K562 (cell line): ENCODE measurements at regions of chr11 and their contacts with region 1.

Region 1: GRCh38 chr11:1050581-1051355 is 14.2 kb upstream of the MUC6 start:
- DNase-seq: peak; percentile 63 to 84 (median 82)
- ATAC-seq: peak; percentile 96
- H3K4me3 ChIP-seq: no peak overlapping the region
- H3K27ac ChIP-seq: no peak overlapping the region
- H3K4me1 ChIP-seq: peaks cover 0 to 47% of the 10 kb centered on the region in 2 experiments; a peak in 3 of 5 replicates
- H3K27me3 ChIP-seq: peaks cover 38 to 91% of the 10 kb centered on the region in 2 experiments
- CTCF ChIP-seq: peak; percentile 85 to 90 (median 86)
- EP300 ChIP-seq: no peak
- POLR2A ChIP-seq: no peak
- RAD21 ChIP-seq: peak; percentile 83 to 91

Region 2: DNA sequence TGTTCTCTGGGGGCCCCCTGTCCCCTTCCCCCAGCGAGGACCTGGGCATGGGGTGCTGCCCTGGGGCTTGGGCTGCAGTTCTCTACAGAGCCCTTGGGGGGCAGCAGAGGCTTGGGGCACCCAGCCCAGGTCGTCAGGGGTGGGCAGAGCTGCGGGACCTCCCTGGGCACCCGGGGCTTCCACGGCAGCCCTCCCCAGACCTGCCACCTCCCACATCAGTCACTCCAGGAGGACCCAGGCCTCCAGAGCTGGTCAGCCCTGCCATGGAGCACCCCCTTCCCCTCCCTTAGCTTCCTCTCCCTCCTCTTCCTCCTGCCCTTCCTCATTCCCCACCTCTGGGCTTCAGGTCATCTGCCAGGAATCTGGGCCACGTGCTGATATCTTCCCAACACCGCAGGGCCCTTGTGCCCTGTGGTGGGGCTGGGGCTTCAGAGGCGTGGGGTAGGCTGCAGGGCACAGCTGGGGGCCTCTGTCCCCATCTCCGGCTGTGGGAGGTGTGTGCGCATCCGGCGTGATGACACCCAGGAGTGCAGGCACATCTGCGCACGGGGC is 202.3 kb before region 1 on chr11:
- CTCF ChIA-PET with region 1: interaction called, 4 read pairs
- POLR2A ChIA-PET with region 1: interaction called, 3 read pairs
- in situ Hi-C with region 1: no loop called
- intact Hi-C with region 1: loop called (anchors 5 kb)
- DNase-seq: peak; percentile 50 to 71 (median 63)
- ATAC-seq: peak; percentile 56
- H3K4me3 ChIP-seq: no peak overlapping the region
- H3K27ac ChIP-seq: no peak overlapping the region
- H3K4me1 ChIP-seq: peaks cover 15 to 84% of the 10 kb centered on the region in 2 experiments
- H3K27me3 ChIP-seq: no peaks in the 10 kb centered on the region
- CTCF ChIP-seq: peak; percentile 80 to 81 (median 80)
- EP300 ChIP-seq: no peak
- POLR2A ChIP-seq: no peak
- RAD21 ChIP-seq: peak; percentile 32 to 70; a peak in 3 of 4 replicates

Region 3: DNA sequence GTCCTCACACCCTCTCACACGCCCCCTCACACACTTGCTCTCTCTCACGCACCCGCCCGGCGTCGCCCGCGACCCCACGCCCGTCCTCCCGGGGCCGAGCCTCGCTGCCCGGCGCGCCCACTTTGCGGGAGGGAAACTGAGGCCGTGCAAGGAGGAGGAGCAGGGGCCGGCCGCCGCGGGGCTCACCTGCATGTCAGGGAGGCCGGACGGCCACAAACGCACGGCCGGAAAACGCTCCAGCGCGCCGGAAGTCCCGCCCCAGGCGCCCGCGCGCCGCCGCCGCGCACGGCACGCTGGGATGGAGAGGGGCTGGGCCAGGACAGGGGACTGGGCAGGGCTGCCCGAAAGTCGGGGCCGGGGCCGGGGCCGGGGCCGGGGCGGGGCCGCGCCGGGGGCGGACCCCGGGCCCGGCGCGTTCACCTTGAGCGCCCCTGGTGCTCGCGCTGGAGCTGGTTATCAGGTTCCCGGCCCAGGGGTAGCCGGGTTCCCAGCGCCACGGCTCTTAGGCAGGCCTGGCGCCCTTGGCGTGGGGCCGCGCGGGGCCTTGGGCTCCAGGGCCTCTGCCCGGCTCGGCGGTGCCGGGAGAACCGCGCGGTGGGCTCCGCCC is 140.1 kb before region 1 on chr11 and contains the start of gene CHID1:
- CTCF ChIA-PET with region 1: no interaction called
- POLR2A ChIA-PET with region 1: no interaction called
- in situ Hi-C with region 1: no loop called
- intact Hi-C with region 1: loop called (anchors 5 kb)
- DNase-seq: peak; percentile 93 to 98 (median 97)
- ATAC-seq: peak; percentile 96
- H3K4me3 ChIP-seq: peak within 1 kb of the TSS; percentile 100
- H3K27ac ChIP-seq: peak within 1 kb of the TSS; percentile 93
- H3K4me1 ChIP-seq: peaks cover 37 to 59% of the 10 kb centered on the region in 2 experiments
- H3K27me3 ChIP-seq: no peaks in the 10 kb centered on the region
- CTCF ChIP-seq: peak in 2 of 3 experiments; percentile 9 to 26; a peak in 2 of 6 replicates
- EP300 ChIP-seq: no peak
- POLR2A ChIP-seq: peak; percentile 76
- RAD21 ChIP-seq: no peak
- polyA plus RNA-seq, gene CHID1: 15.1 to 29.6 TPM